CD8-positive, alpha-beta T cell (primary cell): ENCODE measurements at regions of chr1 and their contacts with region 1.

Region 1: DNA sequence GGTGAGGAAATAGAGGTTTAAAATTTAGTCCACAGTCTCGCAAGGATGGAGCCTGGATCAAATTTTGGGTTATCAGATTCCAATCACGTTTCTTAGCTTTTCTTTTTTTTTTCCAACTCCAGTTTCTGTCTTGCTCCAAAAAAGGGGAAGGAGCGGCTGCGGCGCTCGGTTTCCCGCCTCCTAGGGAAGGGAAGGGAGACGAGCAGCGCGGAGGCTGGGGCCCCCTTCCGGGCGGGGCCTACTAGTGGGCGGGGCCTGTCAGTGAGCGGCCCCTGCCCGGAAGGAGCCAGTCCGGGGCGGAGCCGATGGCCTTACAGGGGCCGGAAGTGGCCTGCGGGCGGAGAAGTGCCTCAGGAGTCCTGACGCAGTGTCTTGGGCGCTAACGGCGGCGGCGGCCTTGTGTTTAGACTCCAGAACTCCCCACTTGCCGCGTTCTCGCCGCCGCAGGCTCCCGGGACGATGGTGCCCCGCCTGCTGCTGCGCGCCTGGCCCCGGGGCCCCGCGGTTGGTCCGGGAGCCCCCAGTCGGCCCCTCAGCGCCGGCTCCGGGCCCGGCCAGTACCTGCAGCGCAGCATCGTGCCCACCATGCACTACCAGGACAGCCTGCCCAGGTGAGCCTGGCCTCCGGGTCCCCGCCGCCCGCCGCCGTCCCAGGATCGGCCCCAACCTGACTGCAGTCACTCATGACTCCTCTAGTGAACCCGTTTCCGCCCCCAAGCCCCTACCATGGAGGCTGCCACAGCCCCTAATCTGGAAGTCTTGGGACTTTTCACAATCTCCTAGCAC is at the start of gene CPT2:
- DNase-seq: peak; percentile 75 to 95 (median 92)
- ATAC-seq: peak; percentile 94
- H3K4me3 ChIP-seq: peak within 1 kb of the TSS; percentile 79 to 80
- H3K4me3 Mint-ChIP-seq: peak within 1 kb of the TSS; percentile 97
- H3K27ac ChIP-seq: peak within 1 kb of the TSS; percentile 95 to 96
- H3K27ac Mint-ChIP-seq: peak within 1 kb of the TSS; percentile 96
- H3K4me1 ChIP-seq: peaks cover 22% of the 10 kb centered on the region
- H3K4me1 Mint-ChIP-seq: peaks cover 38% of the 10 kb centered on the region
- H3K27me3 ChIP-seq: no peaks in the 10 kb centered on the region
- H3K27me3 Mint-ChIP-seq: no peaks in the 10 kb centered on the region
- CTCF ChIP-seq: no peak
- total RNA-seq, gene CPT2: 7.8 to 8.2 TPM

Region 2: DNA sequence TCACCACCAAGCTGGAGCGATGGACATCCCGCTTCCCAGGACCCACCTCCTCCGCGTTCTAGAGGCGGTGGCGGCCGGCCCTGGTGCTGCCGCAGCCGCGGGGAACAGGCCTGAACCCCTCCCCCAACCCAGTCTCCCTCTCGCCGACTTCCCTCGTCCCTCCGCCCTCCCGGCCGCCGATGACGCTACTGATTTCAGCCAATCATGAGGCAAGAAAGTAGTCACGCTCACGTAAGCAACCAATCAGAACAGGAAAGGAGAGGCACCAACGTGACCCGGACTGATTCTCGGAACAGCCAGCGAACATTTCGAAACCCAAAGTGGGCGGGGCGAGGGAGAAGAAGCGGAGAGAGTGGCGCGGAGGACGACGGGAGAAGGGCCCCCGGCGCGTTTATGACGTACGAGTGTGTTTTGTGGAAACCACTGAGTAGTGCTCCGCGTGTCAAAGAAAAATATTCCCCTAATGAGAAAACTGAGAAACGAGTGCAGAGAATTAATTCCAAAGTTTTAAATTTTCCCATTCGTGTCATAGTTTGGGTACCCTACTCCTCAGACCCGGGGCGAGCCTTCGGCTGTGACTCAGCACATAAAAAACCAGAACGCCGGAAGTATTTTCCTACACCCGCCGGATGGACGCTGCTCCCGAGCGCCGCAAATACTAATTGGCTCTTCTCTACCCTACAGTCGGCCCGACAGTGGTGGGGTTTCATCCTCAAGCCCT is 1317.9 kb before region 1 on chr1 and contains the start of gene NRDC:
- CTCF ChIA-PET with region 1: no interaction called
- POLR2A ChIA-PET with region 1: no interaction called
- intact Hi-C with region 1: loop called in 1 of 2 experiments (anchors 5 kb)
- DNase-seq: peak; percentile 99 to 100 (median 99)
- ATAC-seq: peak; percentile 89
- H3K4me3 ChIP-seq: peak within 1 kb of the TSS; percentile 90 to 99
- H3K4me3 Mint-ChIP-seq: no peak within 1 kb of the TSS
- H3K27ac ChIP-seq: peak within 1 kb of the TSS; percentile 89 to 97
- H3K27ac Mint-ChIP-seq: no peak within 1 kb of the TSS
- H3K4me1 ChIP-seq: peaks cover 30% of the 10 kb centered on the region
- H3K4me1 Mint-ChIP-seq: peaks cover 26% of the 10 kb centered on the region
- H3K27me3 ChIP-seq: peaks cover 0 to 2% of the 10 kb centered on the region in 2 experiments
- H3K27me3 Mint-ChIP-seq: peaks cover 13% of the 10 kb centered on the region
- CTCF ChIP-seq: no peak
- total RNA-seq, gene NRDC: 47.6 to 54.3 TPM

Region 3: DNA sequence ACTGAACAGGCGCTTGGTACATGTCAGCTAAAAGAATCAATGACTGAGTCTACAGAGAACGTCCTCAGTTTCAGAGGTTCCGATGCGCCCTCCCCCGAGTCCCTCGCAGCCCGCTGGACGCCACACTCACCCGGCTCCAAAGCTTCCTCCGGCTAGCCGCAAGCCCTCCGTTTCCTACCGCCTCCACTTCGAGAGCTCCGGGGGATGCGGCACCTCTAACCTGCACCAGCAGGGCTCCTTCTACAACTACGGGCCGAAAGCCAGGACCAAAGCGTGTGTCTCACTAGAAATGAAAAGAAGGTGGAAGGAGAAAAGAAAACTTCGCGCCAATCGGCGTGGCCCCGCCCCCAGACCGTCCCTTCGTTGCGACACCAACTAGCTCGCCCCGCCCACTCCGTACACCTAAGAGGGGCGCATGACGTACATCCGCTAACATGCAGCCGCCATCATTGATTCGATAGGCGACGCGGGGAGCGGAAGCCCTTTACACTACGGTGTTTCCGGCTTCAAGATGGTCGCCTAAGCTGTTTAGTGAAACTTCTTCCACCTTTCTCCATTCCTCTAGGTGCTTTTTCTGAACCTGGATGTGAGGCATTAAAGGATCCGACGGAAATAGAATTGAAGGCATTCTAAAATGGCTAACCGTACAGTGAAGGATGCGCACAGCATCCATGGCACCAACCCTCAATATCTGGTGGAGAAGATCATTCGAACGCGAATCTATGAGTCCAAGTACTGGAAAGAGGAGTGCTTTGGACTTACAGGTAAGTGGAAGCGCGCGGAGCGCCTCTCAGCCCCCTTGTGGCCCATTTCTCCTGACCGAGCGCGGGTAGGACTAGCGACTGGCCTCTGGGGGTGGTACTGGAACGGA is 792.3 kb before region 1 on chr1 and contains the starts of genes ORC1 and PRPF38A:
- CTCF ChIA-PET with region 1: no interaction called
- POLR2A ChIA-PET with region 1: no interaction called
- intact Hi-C with region 1: loop called (anchors 5 to 10 kb)
- DNase-seq: peak; percentile 94 to 99 (median 98)
- ATAC-seq: peak; percentile 92
- H3K4me3 ChIP-seq: peak within 1 kb of the TSS; percentile 87 to 92
- H3K4me3 Mint-ChIP-seq: peak within 1 kb of the TSS; percentile 99
- H3K27ac ChIP-seq: peak within 1 kb of the TSS; percentile 96
- H3K27ac Mint-ChIP-seq: peak within 1 kb of the TSS; percentile 98
- H3K4me1 ChIP-seq: peaks cover 26% of the 10 kb centered on the region
- H3K4me1 Mint-ChIP-seq: peaks cover 42% of the 10 kb centered on the region
- H3K27me3 ChIP-seq: no peaks in the 10 kb centered on the region
- H3K27me3 Mint-ChIP-seq: no peaks in the 10 kb centered on the region
- CTCF ChIP-seq: no peak
- total RNA-seq, gene ORC1: 1.2 to 1.3 TPM
- total RNA-seq, gene PRPF38A: 52.2 to 62.0 TPM

Region 4: DNA sequence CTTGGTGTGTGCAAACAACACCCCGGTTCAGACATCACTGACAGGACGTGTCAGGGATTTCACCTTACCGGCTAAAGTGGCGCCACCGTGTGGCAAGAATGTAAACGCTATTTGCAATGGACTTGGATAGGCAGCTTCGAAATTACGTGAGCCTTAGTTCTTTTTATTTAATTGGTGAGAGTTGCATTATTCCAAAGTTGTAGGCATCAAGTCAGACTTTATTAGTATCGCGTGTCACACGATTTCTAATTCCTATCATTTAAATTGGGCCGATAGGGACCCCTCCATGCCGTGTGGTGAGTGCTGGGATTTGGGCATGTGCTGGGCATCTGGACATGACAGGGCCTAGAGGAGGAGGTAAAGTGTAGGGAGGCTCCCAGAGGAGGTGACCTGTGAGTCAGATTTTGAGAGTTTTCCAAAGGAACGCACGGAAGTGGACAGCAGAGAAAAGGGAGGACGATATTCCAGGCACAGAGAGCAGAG is 14.5 kb before region 1 on chr1:
- CTCF ChIA-PET with region 1: interaction called, 12 read pairs
- POLR2A ChIA-PET with region 1: interaction called, 3 read pairs
- intact Hi-C with region 1: no loop called
- DNase-seq: peak; percentile 58 to 87 (median 83)
- ATAC-seq: peak; percentile 92
- H3K4me3 ChIP-seq: no peak overlapping the region
- H3K4me3 Mint-ChIP-seq: no peak overlapping the region
- H3K27ac ChIP-seq: no peak overlapping the region
- H3K27ac Mint-ChIP-seq: no peak overlapping the region
- H3K4me1 ChIP-seq: peaks cover 5% of the 10 kb centered on the region
- H3K4me1 Mint-ChIP-seq: no peaks in the 10 kb centered on the region
- H3K27me3 ChIP-seq: no peaks in the 10 kb centered on the region
- H3K27me3 Mint-ChIP-seq: peaks cover 5% of the 10 kb centered on the region
- CTCF ChIP-seq: peak; percentile 99

Region 5: GRCh38 chr1:53220171-53220961 is 23.7 kb after region 1 on chr1 and contains the start of gene CZIB:
- CTCF ChIA-PET with region 1: interaction called, 3 read pairs
- POLR2A ChIA-PET with region 1: interaction called, 11 read pairs
- intact Hi-C with region 1: loop called (anchors 1 kb)
- DNase-seq: peak; percentile 83 to 95 (median 92)
- ATAC-seq: peak; percentile 92
- H3K4me3 ChIP-seq: peak within 1 kb of the TSS; percentile 80 to 92
- H3K4me3 Mint-ChIP-seq: peak within 1 kb of the TSS; percentile 94
- H3K27ac ChIP-seq: peak within 1 kb of the TSS; percentile 94
- H3K27ac Mint-ChIP-seq: peak within 1 kb of the TSS; percentile 98
- H3K4me1 ChIP-seq: peaks cover 16% of the 10 kb centered on the region
- H3K4me1 Mint-ChIP-seq: peaks cover 18% of the 10 kb centered on the region
- H3K27me3 ChIP-seq: no peaks in the 10 kb centered on the region
- H3K27me3 Mint-ChIP-seq: no peaks in the 10 kb centered on the region
- CTCF ChIP-seq: no peak
- total RNA-seq, gene CZIB: 26.7 to 27.4 TPM

Region 6: DNA sequence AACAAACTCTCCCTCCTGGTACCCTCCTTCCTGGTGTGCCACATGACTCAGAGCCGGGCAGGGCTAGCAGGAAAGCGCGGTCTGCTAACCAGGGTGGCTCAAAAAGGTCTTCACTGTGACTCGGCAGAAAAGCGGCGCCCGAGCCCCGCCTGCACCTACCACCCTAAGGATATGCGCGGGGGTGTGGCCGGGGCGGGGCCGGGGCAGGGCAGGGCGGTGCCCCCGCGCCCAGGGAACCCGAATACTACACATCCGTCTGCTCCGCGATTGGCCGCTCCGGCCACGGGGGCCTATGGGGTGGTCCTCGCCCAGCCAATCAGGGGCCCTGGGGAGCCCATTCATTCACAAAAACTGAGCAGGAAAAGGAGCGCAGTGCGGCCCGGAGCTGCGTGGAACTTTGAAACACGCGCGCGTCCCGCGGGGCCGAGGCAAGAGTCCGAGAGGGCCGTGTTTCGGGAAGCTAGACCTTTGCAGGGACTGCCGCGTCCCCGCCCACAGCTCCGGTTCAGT is 129.5 kb after region 1 on chr1:
- CTCF ChIA-PET with region 1: no interaction called
- POLR2A ChIA-PET with region 1: no interaction called
- intact Hi-C with region 1: loop called in 1 of 2 experiments (anchors 2 kb)
- DNase-seq: peak; percentile 78 to 94 (median 92)
- ATAC-seq: peak; percentile 89
- H3K4me3 ChIP-seq: peak overlapping the region; percentile 74 to 82
- H3K4me3 Mint-ChIP-seq: peak overlapping the region; percentile 94
- H3K27ac ChIP-seq: peak overlapping the region; percentile 26 to 66
- H3K27ac Mint-ChIP-seq: peak overlapping the region; percentile 77
- H3K4me1 ChIP-seq: peaks cover 6% of the 10 kb centered on the region
- H3K4me1 Mint-ChIP-seq: peaks cover 16% of the 10 kb centered on the region
- H3K27me3 ChIP-seq: no peaks in the 10 kb centered on the region
- H3K27me3 Mint-ChIP-seq: no peaks in the 10 kb centered on the region
- CTCF ChIP-seq: no peak

Region 7: DNA sequence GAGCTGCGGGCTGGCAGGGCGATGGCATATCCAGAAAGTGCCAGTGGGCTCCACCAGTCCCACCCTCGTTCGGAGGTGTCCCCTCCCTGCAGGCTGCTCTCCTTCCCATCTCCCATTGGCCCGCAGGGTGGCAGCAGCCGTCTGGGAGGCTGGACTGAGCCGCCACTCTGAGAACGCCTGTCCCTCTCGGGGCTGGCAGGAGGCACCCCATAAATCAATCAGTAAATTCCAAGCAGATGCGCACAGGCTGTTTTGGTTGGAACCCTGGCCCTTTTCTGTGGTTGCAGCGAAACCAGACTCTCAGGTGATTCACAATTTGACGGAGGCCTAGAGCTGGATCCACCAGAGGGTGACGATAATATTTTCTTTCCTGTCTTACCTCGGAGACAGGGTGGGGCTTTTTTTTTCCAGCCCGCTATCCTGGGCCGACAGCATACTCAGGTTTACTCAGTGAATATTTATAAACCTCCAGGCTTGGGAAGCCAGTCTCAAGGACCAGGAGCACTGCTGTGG is 442.6 kb after region 1 on chr1:
- CTCF ChIA-PET with region 1: no interaction called
- POLR2A ChIA-PET with region 1: no interaction called
- intact Hi-C with region 1: no loop called
- DNase-seq: no peak
- ATAC-seq: no peak
- H3K4me3 ChIP-seq: no peak overlapping the region
- H3K4me3 Mint-ChIP-seq: no peak overlapping the region
- H3K27ac ChIP-seq: no peak overlapping the region
- H3K27ac Mint-ChIP-seq: no peak overlapping the region
- H3K4me1 ChIP-seq: no peaks in the 10 kb centered on the region
- H3K4me1 Mint-ChIP-seq: no peaks in the 10 kb centered on the region
- H3K27me3 ChIP-seq: no peaks in the 10 kb centered on the region
- H3K27me3 Mint-ChIP-seq: no peaks in the 10 kb centered on the region
- CTCF ChIP-seq: no peak